OCI-LY7 (cell line): ENCODE measurements at regions of chr3 and their contacts with region 1.

Region 1: GRCh38 chr3:16842272-16843270 is 42.2 kb upstream of the PLCL2 start:
- DNase-seq: peak; percentile 73
- H3K4me3 ChIP-seq: peak overlapping the region; percentile 65
- H3K27ac ChIP-seq: peak overlapping the region; percentile 80
- H3K4me1 ChIP-seq: peaks cover 56% of the 10 kb centered on the region
- CTCF ChIP-seq: no peak

Region 2: GRCh38 chr3:16399473-16399872 is 443.1 kb before region 1 on chr3:
- CTCF ChIA-PET with region 1: no interaction called
- POLR2A ChIA-PET with region 1: no interaction called
- intact Hi-C with region 1: no loop called
- DNase-seq: peak; percentile 17
- H3K4me3 ChIP-seq: no peak overlapping the region
- H3K27ac ChIP-seq: peak overlapping the region; percentile 31
- H3K4me1 ChIP-seq: peaks cover 24% of the 10 kb centered on the region
- CTCF ChIP-seq: no peak

Region 3: GRCh38 chr3:16801698-16802097 is 40.9 kb before region 1 on chr3:
- CTCF ChIA-PET with region 1: no interaction called
- POLR2A ChIA-PET with region 1: interaction called, 4 read pairs
- intact Hi-C with region 1: loop called (anchors 1 kb)
- DNase-seq: peak; percentile 51
- H3K4me3 ChIP-seq: peak overlapping the region; percentile 12
- H3K27ac ChIP-seq: no peak overlapping the region
- H3K4me1 ChIP-seq: peaks cover 30% of the 10 kb centered on the region
- CTCF ChIP-seq: no peak

Region 4: DNA sequence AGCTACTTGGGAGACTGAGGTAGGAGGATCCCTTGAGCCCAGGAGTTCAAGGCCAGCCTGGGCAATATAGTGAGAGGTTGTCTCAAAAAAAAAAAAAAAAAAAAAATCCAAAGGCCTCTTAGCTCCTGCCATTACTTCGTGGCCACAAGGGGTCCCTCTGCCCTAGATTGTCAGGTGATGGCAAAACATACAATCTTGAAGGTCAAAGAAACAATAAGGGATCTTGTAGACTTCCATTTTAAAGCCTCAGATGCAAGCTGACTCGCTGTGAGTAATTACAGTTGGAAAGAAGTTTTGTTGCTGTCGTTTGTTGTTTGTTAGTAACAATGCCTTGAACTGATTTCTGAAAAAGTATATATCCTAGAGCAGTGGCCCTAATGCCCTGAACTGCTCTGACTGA is 13.8 kb before region 1 on chr3:
- CTCF ChIA-PET with region 1: interaction called, 3 read pairs
- POLR2A ChIA-PET with region 1: interaction called, 23 read pairs
- intact Hi-C with region 1: no loop called
- DNase-seq: peak; percentile 77
- H3K4me3 ChIP-seq: no peak overlapping the region
- H3K27ac ChIP-seq: no peak overlapping the region
- H3K4me1 ChIP-seq: peaks cover 14% of the 10 kb centered on the region
- CTCF ChIP-seq: peak; percentile 83

Region 5: GRCh38 chr3:16866571-16866970 is 24.0 kb after region 1 on chr3:
- CTCF ChIA-PET with region 1: no interaction called
- POLR2A ChIA-PET with region 1: interaction called, 20 read pairs
- intact Hi-C with region 1: no loop called
- DNase-seq: peak; percentile 16
- H3K4me3 ChIP-seq: no peak overlapping the region
- H3K27ac ChIP-seq: no peak overlapping the region
- H3K4me1 ChIP-seq: peaks cover 32% of the 10 kb centered on the region
- CTCF ChIP-seq: no peak

Region 6: DNA sequence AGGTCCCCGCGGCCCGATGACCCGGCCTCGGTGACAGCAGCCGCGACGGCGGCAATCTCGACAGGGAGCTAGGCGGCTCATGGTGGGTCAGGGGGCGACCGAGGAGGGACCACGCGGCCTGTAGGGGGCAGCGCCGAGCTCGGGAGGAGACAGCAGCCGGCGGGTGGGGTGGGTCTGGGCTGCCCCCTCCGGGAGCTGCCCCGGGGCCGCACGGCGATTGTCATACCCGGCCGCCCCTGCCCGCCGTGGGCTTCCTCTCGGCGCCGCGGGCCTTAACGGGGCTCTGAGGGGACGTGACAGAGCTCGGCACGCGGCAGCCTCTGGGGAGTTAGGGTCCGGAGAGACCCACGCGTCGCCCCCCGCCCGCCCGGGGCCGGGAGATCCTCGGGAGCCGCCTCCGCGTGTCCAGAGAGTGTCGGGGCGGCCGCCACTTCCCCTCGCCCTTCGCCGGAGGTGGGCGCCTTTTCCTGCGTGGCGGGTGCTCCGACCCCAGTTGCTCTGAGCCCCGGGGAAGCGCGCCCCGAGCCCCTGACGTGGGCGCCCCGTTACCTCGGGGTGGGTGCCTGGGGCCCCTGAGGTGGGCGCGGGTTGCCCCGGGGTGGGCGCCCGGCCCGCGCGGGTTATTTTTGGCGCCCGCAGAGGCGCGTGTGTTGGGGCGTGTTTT is 41.6 kb after region 1 on chr3:
- CTCF ChIA-PET with region 1: interaction called, 3 read pairs
- POLR2A ChIA-PET with region 1: interaction called, 17 read pairs
- intact Hi-C with region 1: loop called (anchors 1 kb)
- DNase-seq: peak; percentile 83
- H3K4me3 ChIP-seq: peak overlapping the region; percentile 76
- H3K27ac ChIP-seq: peak overlapping the region; percentile 79
- H3K4me1 ChIP-seq: peaks cover 22% of the 10 kb centered on the region
- CTCF ChIP-seq: peak; percentile 77

Region 7: GRCh38 chr3:16912400-16913263 is 70.1 kb after region 1 on chr3:
- CTCF ChIA-PET with region 1: no interaction called
- POLR2A ChIA-PET with region 1: interaction called, 8 read pairs
- intact Hi-C with region 1: loop called (anchors 2 kb)
- DNase-seq: peak; percentile 86
- H3K4me3 ChIP-seq: peak overlapping the region; percentile 52
- H3K27ac ChIP-seq: peak overlapping the region; percentile 98
- H3K4me1 ChIP-seq: peaks cover 90% of the 10 kb centered on the region
- CTCF ChIP-seq: no peak

Region 8: DNA sequence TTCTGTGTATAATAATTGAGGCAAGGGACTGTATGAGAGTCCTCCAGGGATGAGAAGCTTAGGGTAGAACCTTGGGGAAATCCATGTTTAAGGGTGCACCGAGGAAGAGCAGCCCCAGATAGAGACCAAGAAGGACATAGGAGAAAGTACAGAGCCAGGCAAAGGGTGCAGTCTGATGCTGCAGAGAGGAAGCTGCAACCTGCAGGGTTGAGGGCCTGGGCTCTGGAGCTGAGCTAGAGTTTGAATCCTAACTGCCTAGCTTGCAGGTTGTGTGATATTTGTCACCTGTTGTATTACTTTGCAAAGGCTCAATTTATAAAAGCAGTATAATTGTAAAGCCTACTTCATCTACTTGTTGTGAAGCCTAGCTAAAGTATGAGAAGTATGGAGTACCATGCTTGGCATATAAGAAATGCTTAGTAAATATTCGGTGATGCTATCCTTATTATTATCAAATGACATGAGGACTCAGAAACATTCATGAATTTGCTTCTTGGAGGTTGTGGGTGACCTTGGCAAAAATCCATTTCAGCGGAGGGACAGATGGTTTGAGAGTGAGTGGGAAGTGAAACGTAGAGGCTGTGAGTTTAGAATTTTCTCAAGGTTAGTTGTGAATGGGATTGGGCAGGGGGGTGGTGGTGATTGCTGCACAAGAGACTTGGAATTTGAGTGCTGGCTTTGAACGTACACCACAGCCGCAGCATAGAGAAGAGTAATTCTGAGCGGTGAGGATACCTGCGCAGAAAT is 86.0 kb after region 1 on chr3:
- CTCF ChIA-PET with region 1: no interaction called
- POLR2A ChIA-PET with region 1: no interaction called
- intact Hi-C with region 1: no loop called
- DNase-seq: no peak
- H3K4me3 ChIP-seq: no peak overlapping the region
- H3K27ac ChIP-seq: no peak overlapping the region
- H3K4me1 ChIP-seq: peaks cover 19% of the 10 kb centered on the region
- CTCF ChIP-seq: no peak

Region 9: GRCh38 chr3:17032407-17033034 is 189.9 kb after region 1 on chr3:
- CTCF ChIA-PET with region 1: no interaction called
- POLR2A ChIA-PET with region 1: interaction called, 5 read pairs
- intact Hi-C with region 1: loop called (anchors 5 kb)
- DNase-seq: peak; percentile 38
- H3K4me3 ChIP-seq: no peak overlapping the region
- H3K27ac ChIP-seq: no peak overlapping the region
- H3K4me1 ChIP-seq: peaks cover 26% of the 10 kb centered on the region
- CTCF ChIP-seq: peak; percentile 85

Region 10: DNA sequence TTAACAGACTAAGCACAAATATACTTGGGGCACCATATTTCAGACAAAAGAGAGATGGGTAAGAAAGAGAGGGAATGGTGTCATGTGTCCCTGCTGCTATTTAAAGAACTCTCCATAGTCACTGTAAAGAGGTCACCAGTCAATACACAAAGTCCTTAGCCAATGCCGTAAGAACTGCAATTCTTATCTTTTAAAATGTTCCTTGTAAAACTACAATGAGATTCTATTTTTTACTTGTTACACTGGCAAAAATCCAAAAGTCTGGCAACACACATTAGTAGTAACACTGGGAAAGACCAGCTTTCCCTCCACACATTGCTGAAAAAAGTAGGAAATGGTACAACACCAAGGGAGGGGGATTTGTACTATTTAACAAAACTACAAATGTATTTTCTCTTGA is 710.5 kb after region 1 on chr3:
- CTCF ChIA-PET with region 1: no interaction called
- POLR2A ChIA-PET with region 1: no interaction called
- intact Hi-C with region 1: no loop called
- DNase-seq: no peak
- H3K4me3 ChIP-seq: no peak overlapping the region
- H3K27ac ChIP-seq: no peak overlapping the region
- H3K4me1 ChIP-seq: no peaks in the 10 kb centered on the region
- CTCF ChIP-seq: no peak